ENCODE measurements at regions of chr9 and their contacts with region 1.

Region 1: DNA sequence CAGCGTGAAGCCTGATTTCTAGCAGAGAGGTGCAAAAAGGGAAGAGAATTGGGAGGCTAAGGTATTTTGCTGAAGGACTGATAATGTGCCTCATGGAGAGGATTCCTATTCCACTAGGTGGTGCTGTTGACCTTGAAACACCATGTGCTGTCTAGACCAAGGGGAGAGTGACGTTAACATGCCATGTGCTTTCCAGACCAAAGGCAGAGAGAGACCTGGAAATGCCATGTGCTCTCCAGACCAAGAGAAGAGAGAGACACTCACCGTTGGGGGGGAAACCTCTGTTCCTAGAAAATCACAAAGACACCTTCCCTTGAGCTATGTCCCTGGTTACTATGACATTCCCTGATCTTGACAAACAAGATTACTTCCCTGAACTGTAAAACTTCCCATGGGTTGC is 286.0 kb upstream of the TUSC1 start:
- DNase-seq: peak; percentile 23
- ATAC-seq: no peak
- H3K4me3 Mint-ChIP-seq: no peak overlapping the region
- H3K27ac Mint-ChIP-seq: no peak overlapping the region
- H3K4me1 Mint-ChIP-seq: no peaks in the 10 kb centered on the region
- H3K27me3 Mint-ChIP-seq: no peaks in the 10 kb centered on the region
- CTCF ChIP-seq: peak; percentile 19

Region 2: GRCh38 chr9:25935188-25935587 is 29.1 kb before region 1 on chr9:
- CTCF ChIA-PET with region 1: no interaction called
- POLR2A ChIA-PET with region 1: no interaction called
- intact Hi-C with region 1: no loop called
- DNase-seq: no peak
- ATAC-seq: no peak
- H3K4me3 Mint-ChIP-seq: no peak overlapping the region
- H3K27ac Mint-ChIP-seq: no peak overlapping the region
- H3K4me1 Mint-ChIP-seq: no peaks in the 10 kb centered on the region
- H3K27me3 Mint-ChIP-seq: no peaks in the 10 kb centered on the region
- CTCF ChIP-seq: no peak

Region 3: GRCh38 chr9:26228273-26228672 is 264.0 kb after region 1 on chr9:
- CTCF ChIA-PET with region 1: no interaction called
- POLR2A ChIA-PET with region 1: no interaction called
- intact Hi-C with region 1: no loop called
- DNase-seq: no peak
- ATAC-seq: no peak
- H3K4me3 Mint-ChIP-seq: no peak overlapping the region
- H3K27ac Mint-ChIP-seq: no peak overlapping the region
- H3K4me1 Mint-ChIP-seq: no peaks in the 10 kb centered on the region
- H3K27me3 Mint-ChIP-seq: no peaks in the 10 kb centered on the region
- CTCF ChIP-seq: no peak

Region 4: GRCh38 chr9:26271495-26272122 is 307.4 kb after region 1 on chr9:
- CTCF ChIA-PET with region 1: no interaction called
- POLR2A ChIA-PET with region 1: no interaction called
- intact Hi-C with region 1: loop called (anchors 5 kb)
- DNase-seq: no peak
- ATAC-seq: no peak
- H3K4me3 Mint-ChIP-seq: no peak overlapping the region
- H3K27ac Mint-ChIP-seq: no peak overlapping the region
- H3K4me1 Mint-ChIP-seq: no peaks in the 10 kb centered on the region
- H3K27me3 Mint-ChIP-seq: no peaks in the 10 kb centered on the region
- CTCF ChIP-seq: no peak

Region 5: GRCh38 chr9:26326473-26327044 is 362.3 kb after region 1 on chr9:
- CTCF ChIA-PET with region 1: interaction called, 3 read pairs
- POLR2A ChIA-PET with region 1: no interaction called
- intact Hi-C with region 1: loop called (anchors 10 kb)
- DNase-seq: peak; percentile 11
- ATAC-seq: no peak
- H3K4me3 Mint-ChIP-seq: no peak overlapping the region
- H3K27ac Mint-ChIP-seq: no peak overlapping the region
- H3K4me1 Mint-ChIP-seq: no peaks in the 10 kb centered on the region
- H3K27me3 Mint-ChIP-seq: no peaks in the 10 kb centered on the region
- CTCF ChIP-seq: peak; percentile 63

Measured in activated CD8-positive, alpha-beta T cell treated with anti-CD3 and anti-CD28 coated beads for 36 hours (primary cell).